Calu3 (cell line): ENCODE measurements at regions of chr4 and their contacts with region 1.

Region 1: GRCh38 chr4:189143262-189143952 is 797.3 kb upstream of the FRG1 start:
- DNase-seq: peak; percentile 57
- H3K4me3 Mint-ChIP-seq: no peak overlapping the region
- H3K27ac Mint-ChIP-seq: no peak overlapping the region
- H3K4me1 Mint-ChIP-seq: no peaks in the 10 kb centered on the region
- H3K27me3 Mint-ChIP-seq: no peaks in the 10 kb centered on the region
- CTCF ChIP-seq: no peak

Region 2: DNA sequence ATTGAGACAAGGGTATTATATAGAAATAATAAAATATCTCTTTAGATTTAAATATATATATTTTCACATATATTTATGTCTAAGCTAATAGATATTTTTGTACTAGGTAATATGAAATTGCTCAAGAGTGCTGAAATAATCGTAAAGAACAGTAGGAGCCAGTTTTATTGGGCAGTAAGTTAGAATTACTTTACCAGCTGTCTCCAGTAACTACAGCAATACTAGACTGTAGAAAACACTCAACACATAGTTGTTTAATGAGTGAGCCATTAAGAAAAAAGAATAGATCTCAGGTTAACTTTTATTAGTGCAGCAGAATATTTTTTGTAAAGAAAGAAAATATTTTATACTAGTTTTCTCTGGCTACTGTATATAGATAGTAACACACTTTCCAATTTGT is 289.0 kb before region 1 on chr4:
- CTCF ChIA-PET with region 1: no interaction called
- intact Hi-C with region 1: no loop called
- DNase-seq: no peak
- H3K4me3 Mint-ChIP-seq: no peak overlapping the region
- H3K27ac Mint-ChIP-seq: no peak overlapping the region
- H3K4me1 Mint-ChIP-seq: no peaks in the 10 kb centered on the region
- H3K27me3 Mint-ChIP-seq: no peaks in the 10 kb centered on the region
- CTCF ChIP-seq: no peak

Region 3: DNA sequence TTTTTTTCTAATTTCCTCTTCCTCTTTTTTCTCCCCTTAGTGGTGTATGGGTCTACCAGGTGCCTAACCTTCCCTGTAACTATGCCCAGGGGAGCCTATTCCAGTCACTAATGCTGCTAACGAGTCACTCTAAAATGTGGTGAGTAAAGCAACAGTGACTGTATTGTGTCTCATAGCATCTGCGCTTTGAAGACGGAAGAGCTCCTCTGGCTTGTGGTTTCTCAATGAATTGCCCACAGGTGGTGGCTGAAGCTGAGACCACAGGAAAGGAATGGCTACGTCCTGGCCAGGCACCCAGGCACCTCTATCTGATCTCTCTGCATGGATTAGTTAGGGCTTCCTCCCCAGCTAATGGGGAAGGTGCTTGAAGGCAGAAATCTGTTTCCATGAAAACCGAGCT is 33.7 kb after region 1 on chr4:
- CTCF ChIA-PET with region 1: no interaction called
- intact Hi-C with region 1: loop called (anchors 5 kb)
- DNase-seq: no peak
- H3K4me3 Mint-ChIP-seq: no peak overlapping the region
- H3K27ac Mint-ChIP-seq: no peak overlapping the region
- H3K4me1 Mint-ChIP-seq: no peaks in the 10 kb centered on the region
- H3K27me3 Mint-ChIP-seq: no peaks in the 10 kb centered on the region
- CTCF ChIP-seq: no peak

Region 4: GRCh38 chr4:189341881-189342280 is 198.5 kb after region 1 on chr4:
- CTCF ChIA-PET with region 1: no interaction called
- intact Hi-C with region 1: no loop called
- DNase-seq: no peak
- H3K4me3 Mint-ChIP-seq: no peak overlapping the region
- H3K27ac Mint-ChIP-seq: no peak overlapping the region
- H3K4me1 Mint-ChIP-seq: no peaks in the 10 kb centered on the region
- H3K27me3 Mint-ChIP-seq: no peaks in the 10 kb centered on the region
- CTCF ChIP-seq: no peak

Region 5: DNA sequence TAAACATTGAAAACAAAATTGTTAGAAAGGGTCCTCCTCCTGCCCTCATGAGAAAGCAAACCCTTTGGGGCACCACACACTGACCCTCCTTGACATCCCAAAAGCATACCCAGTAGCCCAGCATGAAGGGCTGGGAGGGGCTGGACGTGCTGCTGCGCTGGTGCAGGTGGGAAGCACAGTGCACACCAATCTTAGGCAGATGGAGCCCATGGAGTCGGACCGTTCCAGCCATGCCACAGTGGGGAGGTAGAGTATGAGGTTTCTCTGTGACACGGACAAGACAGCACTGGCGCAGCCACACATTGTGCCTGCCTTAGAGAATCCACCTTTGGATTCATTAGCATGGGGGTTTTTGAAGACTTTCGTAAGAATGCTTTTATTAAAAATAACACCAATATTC is 253.0 kb after region 1 on chr4:
- CTCF ChIA-PET with region 1: no interaction called
- intact Hi-C with region 1: no loop called
- DNase-seq: no peak
- H3K4me3 Mint-ChIP-seq: no peak overlapping the region
- H3K27ac Mint-ChIP-seq: no peak overlapping the region
- H3K4me1 Mint-ChIP-seq: no peaks in the 10 kb centered on the region
- H3K27me3 Mint-ChIP-seq: no peaks in the 10 kb centered on the region
- CTCF ChIP-seq: no peak